B cell (primary cell): ENCODE measurements at regions of chr20 and their contacts with region 1.

Region 1: DNA sequence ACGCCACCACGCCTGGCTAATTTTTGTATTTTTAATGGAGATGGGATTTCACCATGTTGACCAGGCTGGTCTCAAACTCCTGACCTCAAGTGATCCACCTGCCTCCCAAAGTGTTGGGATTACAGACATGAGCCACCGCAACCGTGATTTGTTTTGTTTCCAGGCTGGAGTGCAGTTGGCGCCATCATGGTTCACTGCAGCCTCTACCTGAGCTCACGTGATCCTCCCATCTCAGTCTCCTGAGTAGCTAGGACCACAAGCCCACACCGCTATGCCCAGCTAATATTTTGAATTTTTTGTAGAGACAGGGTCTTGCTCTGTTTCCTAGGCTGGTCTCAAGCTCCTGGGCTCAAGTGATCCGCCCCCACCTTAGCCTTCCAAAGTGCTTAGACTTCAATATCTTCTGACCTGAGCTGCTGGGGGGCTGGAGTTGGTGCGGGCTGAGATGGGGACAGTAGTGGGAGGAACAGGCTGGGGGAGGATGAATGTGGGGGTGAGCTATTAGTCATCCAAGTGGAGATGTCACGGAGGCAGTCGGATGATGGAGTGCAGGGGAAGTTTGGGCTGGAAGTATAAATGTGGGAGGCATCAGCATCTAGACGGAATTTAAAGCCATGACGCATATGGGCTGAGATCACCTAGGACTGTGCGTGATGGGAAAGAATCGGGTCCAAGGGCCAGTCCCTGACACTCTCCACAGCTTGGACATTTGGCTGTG is 23.1 kb upstream of the ZMYND8 start:
- DNase-seq: no peak
- ATAC-seq: no peak
- H3K4me3 ChIP-seq: no peak overlapping the region
- H3K4me3 Mint-ChIP-seq: no peak overlapping the region
- H3K27ac ChIP-seq: no peak overlapping the region
- H3K27ac Mint-ChIP-seq: no peak overlapping the region
- H3K4me1 ChIP-seq: peaks cover 7 to 10% of the 10 kb centered on the region in 2 donors
- H3K4me1 Mint-ChIP-seq: peaks cover 10% of the 10 kb centered on the region
- H3K27me3 ChIP-seq: no peaks in the 10 kb centered on the region
- H3K27me3 Mint-ChIP-seq: no peaks in the 10 kb centered on the region
- CTCF ChIP-seq: no peak

Region 2: GRCh38 chr20:47272893-47273590 is 106.5 kb before region 1 on chr20:
- CTCF ChIA-PET with region 1: interaction called, 556 read pairs
- POLR2A ChIA-PET with region 1: interaction called, 23 read pairs
- intact Hi-C with region 1: loop called (anchors 1 kb)
- DNase-seq: peak; percentile 79
- ATAC-seq: peak; percentile 86
- H3K4me3 ChIP-seq: no peak overlapping the region
- H3K4me3 Mint-ChIP-seq: no peak overlapping the region
- H3K27ac ChIP-seq: no peak overlapping the region
- H3K27ac Mint-ChIP-seq: peak overlapping the region; percentile 74
- H3K4me1 ChIP-seq: peaks cover 0 to 5% of the 10 kb centered on the region in 2 donors
- H3K4me1 Mint-ChIP-seq: peaks cover 25% of the 10 kb centered on the region
- H3K27me3 ChIP-seq: no peaks in the 10 kb centered on the region
- H3K27me3 Mint-ChIP-seq: no peaks in the 10 kb centered on the region
- CTCF ChIP-seq: peak; percentile 95

Region 3: DNA sequence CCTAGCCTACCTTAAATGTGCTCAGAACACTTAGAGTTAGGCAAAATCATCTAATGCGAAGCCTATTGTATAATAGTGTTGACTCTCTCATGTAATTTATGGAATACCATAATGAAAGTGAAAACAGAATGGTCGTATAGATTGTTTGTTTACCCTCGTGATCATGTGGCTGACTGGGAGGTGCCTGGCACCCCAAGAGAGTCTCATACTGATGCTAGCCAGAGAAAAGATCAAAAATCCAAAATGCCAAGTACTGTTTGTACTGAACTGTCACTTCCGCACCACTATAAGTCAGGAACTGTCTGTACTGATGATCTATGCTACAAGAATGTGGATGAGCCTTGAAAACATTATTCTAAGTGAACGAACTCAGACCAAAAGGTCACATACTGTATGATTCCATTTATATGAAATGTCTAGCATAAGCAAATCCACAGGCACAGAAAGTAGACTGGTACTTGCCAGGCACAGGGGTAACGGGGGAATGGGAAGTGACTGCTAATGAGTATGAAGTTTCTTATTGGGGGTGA is 45.5 kb before region 1 on chr20:
- CTCF ChIA-PET with region 1: interaction called, 15 read pairs
- POLR2A ChIA-PET with region 1: no interaction called
- intact Hi-C with region 1: loop called (anchors 5 kb)
- DNase-seq: no peak
- ATAC-seq: no peak
- H3K4me3 ChIP-seq: no peak overlapping the region
- H3K4me3 Mint-ChIP-seq: peak overlapping the region; percentile 66
- H3K27ac ChIP-seq: peak overlapping the region in 1 of 2 donors; percentile 3
- H3K27ac Mint-ChIP-seq: peak overlapping the region; percentile 73
- H3K4me1 ChIP-seq: peaks cover 4 to 18% of the 10 kb centered on the region in 2 donors
- H3K4me1 Mint-ChIP-seq: peaks cover 44% of the 10 kb centered on the region
- H3K27me3 ChIP-seq: no peaks in the 10 kb centered on the region
- H3K27me3 Mint-ChIP-seq: no peaks in the 10 kb centered on the region
- CTCF ChIP-seq: no peak

Region 4: GRCh38 chr20:47411161-47411560 is 31.6 kb after region 1 on chr20:
- CTCF ChIA-PET with region 1: interaction called, 89 read pairs
- POLR2A ChIA-PET with region 1: interaction called, 9 read pairs
- intact Hi-C with region 1: loop called (anchors 5 kb)
- DNase-seq: no peak
- ATAC-seq: no peak
- H3K4me3 ChIP-seq: peak overlapping the region in 4 of 5 experiments; percentile 30 to 56 (median 48)
- H3K4me3 Mint-ChIP-seq: peak overlapping the region; percentile 91
- H3K27ac ChIP-seq: peak overlapping the region; percentile 97 to 99
- H3K27ac Mint-ChIP-seq: peak overlapping the region; percentile 93
- H3K4me1 ChIP-seq: peaks cover 79 to 90% of the 10 kb centered on the region in 2 donors
- H3K4me1 Mint-ChIP-seq: peaks cover 76% of the 10 kb centered on the region
- H3K27me3 ChIP-seq: no peaks in the 10 kb centered on the region
- H3K27me3 Mint-ChIP-seq: no peaks in the 10 kb centered on the region
- CTCF ChIP-seq: no peak

Region 5: GRCh38 chr20:47479506-47479905 is 99.9 kb after region 1 on chr20:
- CTCF ChIA-PET with region 1: interaction called, 14 read pairs
- POLR2A ChIA-PET with region 1: no interaction called
- intact Hi-C with region 1: no loop called
- DNase-seq: no peak
- ATAC-seq: no peak
- H3K4me3 ChIP-seq: no peak overlapping the region
- H3K4me3 Mint-ChIP-seq: no peak overlapping the region
- H3K27ac ChIP-seq: peak overlapping the region in 1 of 2 donors; percentile 13
- H3K27ac Mint-ChIP-seq: peak overlapping the region; percentile 75
- H3K4me1 ChIP-seq: peaks cover 10 to 21% of the 10 kb centered on the region in 2 donors
- H3K4me1 Mint-ChIP-seq: peaks cover 42% of the 10 kb centered on the region
- H3K27me3 ChIP-seq: no peaks in the 10 kb centered on the region
- H3K27me3 Mint-ChIP-seq: no peaks in the 10 kb centered on the region
- CTCF ChIP-seq: no peak

Region 6: DNA sequence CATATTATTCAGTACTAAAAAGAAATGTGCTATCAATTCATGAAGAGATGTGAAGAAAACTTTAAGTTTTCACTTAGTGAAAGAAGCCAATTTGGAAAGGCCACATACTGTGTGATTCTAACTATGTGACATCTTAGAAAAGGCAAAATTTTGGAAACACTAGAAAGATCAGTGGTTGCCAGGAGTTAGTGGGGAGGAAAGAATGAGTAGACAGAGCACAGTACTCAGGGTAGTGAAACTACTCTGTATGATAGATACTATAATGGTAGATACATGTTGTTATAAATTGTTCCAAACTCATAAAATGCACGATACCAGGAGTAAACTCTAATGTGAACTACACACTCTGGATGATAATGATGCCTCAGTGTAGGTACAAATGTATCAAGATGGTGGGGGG is 136.3 kb after region 1 on chr20:
- CTCF ChIA-PET with region 1: interaction called, 14 read pairs
- POLR2A ChIA-PET with region 1: interaction called, 7 read pairs
- intact Hi-C with region 1: no loop called
- DNase-seq: no peak
- ATAC-seq: no peak
- H3K4me3 ChIP-seq: no peak overlapping the region
- H3K4me3 Mint-ChIP-seq: peak overlapping the region; percentile 2
- H3K27ac ChIP-seq: peak overlapping the region in 1 of 2 donors; percentile 76
- H3K27ac Mint-ChIP-seq: peak overlapping the region; percentile 35
- H3K4me1 ChIP-seq: peaks cover 32 to 57% of the 10 kb centered on the region in 2 donors
- H3K4me1 Mint-ChIP-seq: peaks cover 61% of the 10 kb centered on the region
- H3K27me3 ChIP-seq: no peaks in the 10 kb centered on the region
- H3K27me3 Mint-ChIP-seq: no peaks in the 10 kb centered on the region
- CTCF ChIP-seq: no peak

Region 7: DNA sequence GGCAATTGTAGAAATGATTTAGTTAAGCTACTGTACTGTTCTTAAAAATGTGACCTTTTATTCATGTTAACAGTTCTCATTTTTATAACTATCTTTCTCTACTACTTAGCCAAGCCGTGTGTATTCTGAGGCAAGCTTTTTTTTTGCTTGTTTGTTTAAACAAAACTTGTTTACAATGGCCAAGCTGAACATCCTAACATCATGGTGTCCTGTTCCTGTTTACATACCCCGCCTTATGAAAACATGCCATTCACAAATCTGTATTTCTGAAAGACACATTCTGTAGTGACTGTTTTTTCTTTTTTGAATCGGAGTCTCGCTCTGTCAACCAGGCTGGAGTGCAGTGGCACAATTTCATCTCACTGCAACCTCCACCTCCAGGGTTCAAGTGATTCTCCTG is 263.0 kb after region 1 on chr20:
- CTCF ChIA-PET with region 1: interaction called, 3 read pairs
- POLR2A ChIA-PET with region 1: interaction called, 11 read pairs
- intact Hi-C with region 1: no loop called
- DNase-seq: no peak
- ATAC-seq: no peak
- H3K4me3 ChIP-seq: no peak overlapping the region
- H3K4me3 Mint-ChIP-seq: no peak overlapping the region
- H3K27ac ChIP-seq: no peak overlapping the region
- H3K27ac Mint-ChIP-seq: no peak overlapping the region
- H3K4me1 ChIP-seq: no peaks in the 10 kb centered on the region
- H3K4me1 Mint-ChIP-seq: peaks cover 3% of the 10 kb centered on the region
- H3K27me3 ChIP-seq: no peaks in the 10 kb centered on the region
- H3K27me3 Mint-ChIP-seq: no peaks in the 10 kb centered on the region
- CTCF ChIP-seq: no peak